Activated CD8-positive, alpha-beta T cell treated with anti-CD3 and anti-CD28 coated beads, Interleukin-2, amount 10 ng/mL, durations not matched to agents 7 days and 5 days (primary cell): ENCODE measurements at regions of chr17 and their contacts with region 1.

Region 1: DNA sequence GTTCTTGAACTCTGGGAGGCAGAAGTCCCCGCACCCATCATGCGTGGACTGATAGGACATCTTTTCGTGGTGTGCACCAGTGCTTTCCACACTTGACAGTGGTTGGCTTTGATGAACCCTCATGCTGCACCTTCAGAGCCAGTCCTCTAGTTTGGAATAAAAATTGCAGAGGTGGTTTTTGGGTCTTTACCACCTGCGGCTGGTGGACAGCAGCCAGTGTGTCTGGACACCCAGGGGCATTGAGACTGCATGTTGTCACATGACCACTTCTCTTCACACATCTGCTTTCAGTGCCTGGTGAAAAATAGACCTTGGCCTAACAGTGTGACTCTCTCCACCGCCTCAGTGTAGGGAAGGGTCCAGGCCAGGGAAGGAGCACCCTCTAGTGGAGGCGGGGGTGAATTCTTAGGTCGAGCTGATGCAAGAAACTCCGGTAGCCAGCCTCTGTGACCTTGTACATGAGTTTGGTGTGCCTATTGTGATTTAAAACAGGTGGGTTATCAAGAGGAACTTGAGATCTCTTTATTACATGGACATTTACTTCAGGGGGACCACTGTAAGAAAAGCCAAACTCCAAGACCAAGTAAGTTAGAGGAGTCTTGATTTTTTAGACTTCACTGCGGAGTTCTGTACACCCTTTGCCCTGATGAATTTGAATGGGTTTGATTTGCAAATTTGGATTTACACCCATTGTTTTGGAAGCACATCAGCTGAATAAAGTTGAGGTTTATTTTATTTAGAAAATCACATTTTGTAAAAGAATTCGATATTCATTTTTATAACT is 17.9 kb downstream of the GOSR2 start:
- DNase-seq: peak; percentile 81
- ATAC-seq: peak; percentile 76
- H3K4me3 Mint-ChIP-seq: no peak overlapping the region
- H3K27ac Mint-ChIP-seq: peak overlapping the region; percentile 45
- H3K4me1 Mint-ChIP-seq: peaks cover 27% of the 10 kb centered on the region
- H3K27me3 Mint-ChIP-seq: no peaks in the 10 kb centered on the region

Region 2: GRCh38 chr17:46841561-46842379 is 99.0 kb before region 1 on chr17:
- CTCF ChIA-PET with region 1: interaction called, 44 read pairs
- POLR2A ChIA-PET with region 1: no interaction called
- DNase-seq: no peak
- ATAC-seq: peak; percentile 44
- H3K4me3 Mint-ChIP-seq: no peak overlapping the region
- H3K27ac Mint-ChIP-seq: no peak overlapping the region
- H3K4me1 Mint-ChIP-seq: peaks cover 6% of the 10 kb centered on the region
- H3K27me3 Mint-ChIP-seq: peaks cover 39% of the 10 kb centered on the region

Region 3: DNA sequence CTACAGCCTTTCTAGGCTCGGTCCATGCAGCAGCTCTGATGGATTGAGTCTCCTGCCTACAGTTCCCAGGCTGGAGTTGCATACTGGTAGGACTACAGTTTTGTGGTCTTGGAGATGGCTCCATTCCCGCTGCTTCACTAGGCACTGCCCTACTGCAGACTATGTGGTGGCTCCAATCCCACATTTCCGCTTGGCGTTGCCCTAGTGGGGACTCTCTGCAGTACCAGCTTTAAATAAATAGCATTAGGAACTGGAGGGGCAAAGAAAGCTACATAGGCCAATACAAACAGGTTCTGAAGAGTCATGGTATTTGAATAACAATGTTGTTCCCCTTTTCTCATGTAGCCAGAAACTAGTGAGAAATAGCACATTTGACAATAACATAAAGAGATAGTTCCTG is 23.3 kb before region 1 on chr17:
- CTCF ChIA-PET with region 1: interaction called, 11 read pairs
- POLR2A ChIA-PET with region 1: interaction called, 3 read pairs
- DNase-seq: no peak
- ATAC-seq: no peak
- H3K4me3 Mint-ChIP-seq: no peak overlapping the region
- H3K27ac Mint-ChIP-seq: no peak overlapping the region
- H3K4me1 Mint-ChIP-seq: peaks cover 6% of the 10 kb centered on the region
- H3K27me3 Mint-ChIP-seq: no peaks in the 10 kb centered on the region

Region 4: DNA sequence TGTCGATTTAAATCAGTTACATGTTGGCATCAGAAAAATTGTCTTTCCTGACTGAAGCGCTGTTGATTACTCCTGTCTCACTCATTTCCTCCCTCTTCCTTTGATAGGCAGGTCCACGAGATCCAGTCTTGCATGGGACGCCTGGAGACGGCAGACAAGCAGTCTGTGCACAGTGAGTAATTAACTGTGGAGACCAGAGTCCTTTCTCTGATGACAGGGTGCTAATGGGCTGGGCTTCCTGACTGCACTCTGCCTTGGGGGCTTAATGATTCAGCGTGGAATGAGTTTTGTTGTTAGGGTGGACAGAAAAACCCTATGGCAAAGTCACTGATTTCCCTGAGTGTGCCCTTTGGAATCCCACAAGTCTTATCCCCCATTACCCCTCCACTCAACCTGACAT is 11.4 kb before region 1 on chr17:
- CTCF ChIA-PET with region 1: interaction called, 11 read pairs
- POLR2A ChIA-PET with region 1: interaction called, 3 read pairs
- DNase-seq: no peak
- ATAC-seq: no peak
- H3K4me3 Mint-ChIP-seq: no peak overlapping the region
- H3K27ac Mint-ChIP-seq: no peak overlapping the region
- H3K4me1 Mint-ChIP-seq: peaks cover 44% of the 10 kb centered on the region
- H3K27me3 Mint-ChIP-seq: no peaks in the 10 kb centered on the region

Region 5: DNA sequence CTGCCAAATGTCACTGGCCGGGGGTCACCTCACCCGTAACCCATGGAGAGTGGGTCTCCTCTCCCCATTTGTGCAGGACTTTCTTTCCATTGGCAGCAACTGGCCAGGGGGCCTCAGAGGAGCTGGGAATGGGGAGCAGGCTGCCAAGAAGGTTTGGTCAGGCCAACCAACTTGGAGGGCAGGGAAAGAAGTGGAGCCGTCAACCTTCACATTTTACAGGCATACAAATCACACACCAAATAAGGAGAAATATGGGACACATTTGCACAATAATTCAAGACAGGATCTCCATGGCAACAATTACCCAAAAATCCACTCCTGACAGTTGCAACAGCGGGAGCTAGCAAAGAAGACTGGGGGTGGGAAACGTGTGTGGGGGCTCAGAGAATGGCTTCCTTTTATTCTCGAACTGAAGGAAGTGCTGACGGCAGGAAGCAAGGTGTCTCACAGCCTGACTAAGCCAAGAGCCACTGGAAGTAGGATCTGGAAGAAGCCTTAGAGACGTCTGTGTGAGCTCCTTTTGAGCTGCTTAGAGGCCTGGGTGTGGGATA is 17.3 kb after region 1 on chr17:
- CTCF ChIA-PET with region 1: interaction called, 16 read pairs
- POLR2A ChIA-PET with region 1: no interaction called
- DNase-seq: no peak
- ATAC-seq: no peak
- H3K4me3 Mint-ChIP-seq: no peak overlapping the region
- H3K27ac Mint-ChIP-seq: no peak overlapping the region
- H3K4me1 Mint-ChIP-seq: peaks cover 6% of the 10 kb centered on the region
- H3K27me3 Mint-ChIP-seq: peaks cover 5% of the 10 kb centered on the region

Region 6: GRCh38 chr17:46995841-46996571 is 55.2 kb after region 1 on chr17:
- CTCF ChIA-PET with region 1: interaction called, 12 read pairs
- POLR2A ChIA-PET with region 1: no interaction called
- DNase-seq: no peak
- ATAC-seq: no peak
- H3K4me3 Mint-ChIP-seq: no peak overlapping the region
- H3K27ac Mint-ChIP-seq: no peak overlapping the region
- H3K4me1 Mint-ChIP-seq: peaks cover 6% of the 10 kb centered on the region
- H3K27me3 Mint-ChIP-seq: no peaks in the 10 kb centered on the region